B cell (primary cell): ENCODE measurements at regions of chr6 and their contacts with region 1.

Region 1: DNA sequence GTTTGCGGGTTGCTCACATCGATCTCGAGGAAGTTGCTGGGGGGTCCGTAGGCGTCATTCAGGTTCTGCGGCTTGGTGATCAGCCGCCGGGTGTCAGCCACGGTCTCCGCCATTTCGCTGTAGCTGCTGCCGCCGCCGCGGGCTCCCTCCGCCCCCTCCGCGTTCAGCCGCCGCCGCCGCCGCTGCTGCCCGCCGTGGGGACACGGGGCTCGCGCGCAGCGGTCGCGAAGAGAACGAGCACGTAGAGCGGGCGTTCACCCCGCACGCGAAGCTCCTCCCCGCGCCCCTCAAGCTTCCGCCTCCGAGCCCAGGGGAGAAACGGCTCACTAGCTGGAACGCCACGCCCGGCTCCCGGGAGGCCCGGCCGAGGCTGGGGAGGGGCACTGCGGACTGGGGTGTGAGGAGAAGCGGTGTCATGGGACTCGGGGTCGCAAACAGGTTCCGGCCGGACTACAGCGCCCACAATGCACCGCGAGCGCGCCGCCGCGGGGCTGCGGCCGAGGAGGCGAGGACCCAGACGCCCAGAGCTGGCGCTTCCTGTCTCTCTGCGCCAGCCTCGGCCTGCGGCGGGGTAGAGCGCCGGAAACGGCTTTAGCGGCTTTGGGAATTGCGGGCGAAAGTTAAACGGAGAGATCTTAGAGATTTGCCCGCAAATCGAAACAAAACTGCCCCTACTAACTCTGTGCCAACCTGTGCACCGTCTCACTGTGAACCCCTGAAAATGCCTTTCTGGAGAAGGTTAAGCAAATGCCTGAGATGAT is at the start of gene SNX3:
- DNase-seq: peak; percentile 99
- ATAC-seq: peak; percentile 90
- H3K4me3 ChIP-seq: peak within 1 kb of the TSS; percentile 95 to 99 (median 96)
- H3K4me3 Mint-ChIP-seq: peak within 1 kb of the TSS; percentile 89
- H3K27ac ChIP-seq: peak within 1 kb of the TSS; percentile 91 to 97
- H3K27ac Mint-ChIP-seq: peak within 1 kb of the TSS; percentile 93
- H3K4me1 ChIP-seq: peaks cover 30 to 35% of the 10 kb centered on the region in 2 donors
- H3K4me1 Mint-ChIP-seq: peaks cover 30% of the 10 kb centered on the region
- H3K27me3 ChIP-seq: no peaks in the 10 kb centered on the region
- H3K27me3 Mint-ChIP-seq: no peaks in the 10 kb centered on the region
- CTCF ChIP-seq: no peak
- total RNA-seq, gene SNX3: 95.3 and 96.0 TPM in 2 replicates

Region 2: GRCh38 chr6:108074359-108075144 is 186.4 kb before region 1 on chr6 and contains the start of gene OSTM1:
- CTCF ChIA-PET with region 1: no interaction called
- POLR2A ChIA-PET with region 1: no interaction called
- intact Hi-C with region 1: loop called (anchors 2 kb)
- DNase-seq: peak; percentile 95
- ATAC-seq: peak; percentile 96
- H3K4me3 ChIP-seq: peak within 1 kb of the TSS; percentile 75 to 96 (median 90)
- H3K4me3 Mint-ChIP-seq: peak within 1 kb of the TSS; percentile 89
- H3K27ac ChIP-seq: peak within 1 kb of the TSS; percentile 78 to 91
- H3K27ac Mint-ChIP-seq: peak within 1 kb of the TSS; percentile 93
- H3K4me1 ChIP-seq: peaks cover 15 to 18% of the 10 kb centered on the region in 2 donors
- H3K4me1 Mint-ChIP-seq: peaks cover 29% of the 10 kb centered on the region
- H3K27me3 ChIP-seq: no peaks in the 10 kb centered on the region
- H3K27me3 Mint-ChIP-seq: peaks cover 5% of the 10 kb centered on the region
- CTCF ChIP-seq: no peak
- total RNA-seq, gene OSTM1: 33.2 and 41.7 TPM in 2 replicates

Region 3: GRCh38 chr6:108121612-108122011 is 139.4 kb before region 1 on chr6:
- CTCF ChIA-PET with region 1: no interaction called
- POLR2A ChIA-PET with region 1: interaction called, 10 read pairs
- intact Hi-C with region 1: loop called (anchors 5 kb)
- DNase-seq: no peak
- ATAC-seq: no peak
- H3K4me3 ChIP-seq: no peak overlapping the region
- H3K4me3 Mint-ChIP-seq: peak overlapping the region; percentile 8
- H3K27ac ChIP-seq: no peak overlapping the region
- H3K27ac Mint-ChIP-seq: no peak overlapping the region
- H3K4me1 ChIP-seq: peaks cover 33% of the 10 kb centered on the region in 2 donors
- H3K4me1 Mint-ChIP-seq: peaks cover 35% of the 10 kb centered on the region
- H3K27me3 ChIP-seq: peaks cover 0 to 74% (median 56%) of the 10 kb centered on the region in 4 experiments
- H3K27me3 Mint-ChIP-seq: peaks cover 78% of the 10 kb centered on the region
- CTCF ChIP-seq: no peak

Region 4: GRCh38 chr6:108348655-108349349 is 87.8 kb after region 1 on chr6:
- CTCF ChIA-PET with region 1: no interaction called
- POLR2A ChIA-PET with region 1: no interaction called
- intact Hi-C with region 1: loop called (anchors 1 kb)
- DNase-seq: peak; percentile 83
- ATAC-seq: peak; percentile 97
- H3K4me3 ChIP-seq: peak overlapping the region in 2 of 5 experiments; percentile 6 to 29
- H3K4me3 Mint-ChIP-seq: peak overlapping the region; percentile 84
- H3K27ac ChIP-seq: peak overlapping the region; percentile 88
- H3K27ac Mint-ChIP-seq: peak overlapping the region; percentile 98
- H3K4me1 ChIP-seq: peaks cover 21 to 31% of the 10 kb centered on the region in 2 donors
- H3K4me1 Mint-ChIP-seq: peaks cover 28% of the 10 kb centered on the region
- H3K27me3 ChIP-seq: no peaks in the 10 kb centered on the region
- H3K27me3 Mint-ChIP-seq: no peaks in the 10 kb centered on the region
- CTCF ChIP-seq: no peak

Region 5: DNA sequence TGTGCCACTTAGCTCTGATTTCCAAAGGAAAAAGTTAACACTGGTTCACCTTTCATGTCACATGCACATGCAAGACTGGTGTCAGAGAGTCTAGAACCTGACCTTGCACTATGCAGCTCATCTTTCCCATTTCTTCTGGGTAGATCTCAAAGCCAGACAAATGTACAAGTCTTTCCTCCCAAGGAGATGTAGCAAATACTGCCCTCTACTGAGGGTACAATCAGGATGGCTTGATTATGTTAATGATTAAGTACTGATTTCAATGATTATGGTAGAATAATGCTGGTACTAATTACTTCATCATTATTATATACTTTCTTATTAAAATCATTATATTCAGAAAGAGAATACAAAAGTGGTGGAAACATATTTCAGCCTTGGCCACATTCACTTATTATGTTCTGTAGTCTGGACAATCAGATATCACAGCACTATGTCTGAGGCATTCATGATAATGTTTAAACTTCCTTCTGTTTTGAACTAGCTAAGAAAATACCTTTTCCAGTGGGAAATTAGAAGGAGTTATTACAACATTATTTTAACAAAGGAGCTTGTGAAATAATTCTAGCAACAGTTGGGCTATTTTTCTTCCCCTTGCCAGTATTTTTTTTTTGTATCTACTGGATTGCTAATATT is 231.3 kb after region 1 on chr6:
- CTCF ChIA-PET with region 1: interaction called, 17 read pairs
- POLR2A ChIA-PET with region 1: interaction called, 3 read pairs
- intact Hi-C with region 1: no loop called
- DNase-seq: peak; percentile 65
- ATAC-seq: peak; percentile 54
- H3K4me3 ChIP-seq: no peak overlapping the region
- H3K4me3 Mint-ChIP-seq: no peak overlapping the region
- H3K27ac ChIP-seq: no peak overlapping the region
- H3K27ac Mint-ChIP-seq: no peak overlapping the region
- H3K4me1 ChIP-seq: no peaks in the 10 kb centered on the region
- H3K4me1 Mint-ChIP-seq: no peaks in the 10 kb centered on the region
- H3K27me3 ChIP-seq: no peaks in the 10 kb centered on the region
- H3K27me3 Mint-ChIP-seq: no peaks in the 10 kb centered on the region
- CTCF ChIP-seq: peak; percentile 78

Region 6: GRCh38 chr6:109879521-109879920 is 1618.5 kb after region 1 on chr6:
- CTCF ChIA-PET with region 1: no interaction called
- POLR2A ChIA-PET with region 1: no interaction called
- intact Hi-C with region 1: no loop called
- DNase-seq: no peak
- ATAC-seq: no peak
- H3K4me3 ChIP-seq: no peak overlapping the region
- H3K4me3 Mint-ChIP-seq: no peak overlapping the region
- H3K27ac ChIP-seq: no peak overlapping the region
- H3K27ac Mint-ChIP-seq: no peak overlapping the region
- H3K4me1 ChIP-seq: no peaks in the 10 kb centered on the region
- H3K4me1 Mint-ChIP-seq: no peaks in the 10 kb centered on the region
- H3K27me3 ChIP-seq: no peaks in the 10 kb centered on the region
- H3K27me3 Mint-ChIP-seq: peaks cover 26% of the 10 kb centered on the region
- CTCF ChIP-seq: no peak